Activated CD4-positive, alpha-beta memory T cell treated with anti-CD3 and anti-CD28 coated beads for 36 hours (primary cell): ENCODE measurements at regions of chr1 and their contacts with region 1.

Region 1: DNA sequence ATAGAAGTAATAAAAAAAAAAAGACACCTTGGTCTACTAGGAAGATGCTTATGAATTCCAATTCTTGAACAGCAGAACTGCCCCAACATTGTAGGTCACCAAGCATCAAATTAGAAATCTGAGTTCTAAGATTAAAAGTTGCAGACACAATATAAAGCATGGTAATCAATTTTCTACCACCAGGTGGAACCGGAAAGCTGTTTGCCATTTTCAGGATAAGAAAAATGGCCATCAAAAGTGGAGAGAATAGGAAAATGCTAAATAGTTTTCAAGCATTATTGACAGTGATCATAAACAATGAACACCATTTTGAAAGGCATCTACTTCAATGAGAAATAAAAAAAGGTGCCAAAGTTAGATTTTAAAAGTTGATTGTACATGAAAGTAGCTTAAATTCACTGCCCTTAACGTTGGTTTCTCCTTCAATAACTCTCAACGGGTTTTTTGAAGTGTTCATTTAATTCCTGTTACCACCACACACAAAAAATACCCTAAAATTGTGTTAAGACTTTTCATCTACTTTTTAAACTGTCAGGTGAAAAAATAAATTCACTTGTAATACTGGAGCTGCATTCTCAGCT is 252.9 kb downstream of the KCNT2 start:
- DNase-seq: no peak
- H3K4me3 Mint-ChIP-seq: no peak overlapping the region
- H3K27ac Mint-ChIP-seq: no peak overlapping the region
- H3K4me1 Mint-ChIP-seq: no peaks in the 10 kb centered on the region
- H3K27me3 Mint-ChIP-seq: no peaks in the 10 kb centered on the region

Region 2: GRCh38 chr1:196380316-196380715 is 25.0 kb after region 1 on chr1:
- CTCF ChIA-PET with region 1: no interaction called
- POLR2A ChIA-PET with region 1: no interaction called
- intact Hi-C with region 1: no loop called
- DNase-seq: no peak
- H3K4me3 Mint-ChIP-seq: no peak overlapping the region
- H3K27ac Mint-ChIP-seq: no peak overlapping the region
- H3K4me1 Mint-ChIP-seq: no peaks in the 10 kb centered on the region
- H3K27me3 Mint-ChIP-seq: no peaks in the 10 kb centered on the region

Region 3: DNA sequence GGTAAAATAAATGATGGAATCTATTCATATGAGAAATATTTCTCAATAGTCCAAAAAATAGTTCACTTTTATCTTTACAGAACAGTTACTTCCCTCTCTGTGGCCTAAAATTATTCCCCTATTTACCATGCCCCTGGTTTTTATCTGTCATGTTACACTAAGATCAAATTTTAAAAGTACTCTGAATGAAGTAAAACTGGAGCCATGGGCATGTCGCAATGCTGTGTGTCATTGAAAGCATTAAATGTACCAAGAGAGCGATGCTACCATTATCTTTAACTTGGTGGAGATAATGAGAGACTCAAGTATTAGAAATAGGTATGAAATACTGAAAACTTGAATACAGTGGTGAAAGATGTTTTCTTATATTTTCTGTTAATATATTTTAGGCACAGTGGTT is 106.8 kb after region 1 on chr1:
- CTCF ChIA-PET with region 1: no interaction called
- POLR2A ChIA-PET with region 1: no interaction called
- intact Hi-C with region 1: no loop called
- DNase-seq: no peak
- H3K4me3 Mint-ChIP-seq: no peak overlapping the region
- H3K27ac Mint-ChIP-seq: no peak overlapping the region
- H3K4me1 Mint-ChIP-seq: no peaks in the 10 kb centered on the region
- H3K27me3 Mint-ChIP-seq: no peaks in the 10 kb centered on the region

Region 4: DNA sequence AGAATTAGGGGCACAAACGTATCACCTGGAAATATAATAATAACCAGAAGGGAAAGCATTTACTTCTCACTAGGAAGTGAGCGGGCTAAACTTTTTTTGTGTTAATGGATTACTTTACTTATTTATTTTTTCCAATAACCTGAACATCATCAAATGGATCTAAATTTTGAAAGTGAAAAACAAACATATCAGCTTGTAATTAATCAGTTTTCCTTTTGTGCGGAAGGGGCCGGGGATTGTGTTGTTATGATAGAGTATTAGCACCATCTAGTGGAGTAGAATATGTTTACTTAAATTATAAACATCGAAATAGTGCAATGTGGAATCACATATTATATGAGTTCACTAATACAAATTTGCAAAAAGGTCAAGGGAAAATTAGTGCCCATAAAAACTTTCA is 305.6 kb after region 1 on chr1:
- CTCF ChIA-PET with region 1: no interaction called
- POLR2A ChIA-PET with region 1: no interaction called
- intact Hi-C with region 1: loop called (anchors 1 kb)
- DNase-seq: no peak
- H3K4me3 Mint-ChIP-seq: no peak overlapping the region
- H3K27ac Mint-ChIP-seq: no peak overlapping the region
- H3K4me1 Mint-ChIP-seq: peaks cover 6% of the 10 kb centered on the region
- H3K27me3 Mint-ChIP-seq: no peaks in the 10 kb centered on the region

Region 5: GRCh38 chr1:197103300-197103699 is 748.0 kb after region 1 on chr1:
- CTCF ChIA-PET with region 1: no interaction called
- POLR2A ChIA-PET with region 1: no interaction called
- intact Hi-C with region 1: no loop called
- DNase-seq: no peak
- H3K4me3 Mint-ChIP-seq: no peak overlapping the region
- H3K27ac Mint-ChIP-seq: no peak overlapping the region
- H3K4me1 Mint-ChIP-seq: peaks cover 21% of the 10 kb centered on the region
- H3K27me3 Mint-ChIP-seq: no peaks in the 10 kb centered on the region